ENCODE measurements at regions of chr19 and their contacts with region 1.

Region 1: DNA sequence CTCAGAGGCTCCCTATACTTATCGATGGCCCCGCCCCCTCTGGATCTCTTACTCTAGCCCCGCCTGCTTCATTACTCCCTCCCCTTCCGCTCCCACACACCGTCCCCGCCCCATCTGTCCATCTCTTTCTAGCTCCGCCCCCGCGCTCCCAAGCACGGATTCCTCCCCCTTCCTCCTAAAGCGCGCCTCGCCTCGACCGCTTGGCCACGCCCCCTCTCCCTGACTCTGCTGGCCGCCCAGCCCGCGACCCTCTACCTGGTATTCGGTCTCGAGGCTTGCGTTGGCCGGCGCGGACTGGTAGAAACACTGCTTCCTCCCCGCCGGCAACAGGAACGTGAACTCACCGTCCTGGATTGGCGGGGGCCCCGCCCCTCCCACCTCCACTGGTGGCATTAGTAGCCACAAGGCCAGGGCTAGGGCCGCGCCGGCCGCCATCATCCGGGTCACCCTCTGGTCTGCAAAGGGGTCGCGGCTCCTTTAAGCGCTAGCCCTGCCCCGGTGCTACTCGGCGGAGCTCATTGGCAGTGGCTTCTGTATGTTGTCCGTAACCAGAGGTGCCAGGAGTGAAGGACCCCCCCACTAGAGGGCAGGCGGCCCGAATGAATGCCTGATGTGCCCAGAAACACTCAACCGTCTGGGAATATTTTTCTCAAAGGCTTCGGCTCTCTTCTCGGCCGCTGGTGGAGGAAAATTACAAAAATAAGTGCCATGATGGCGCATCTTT is at the start of gene TMED1:
- DNase-seq: peak; percentile 99

Region 2: DNA sequence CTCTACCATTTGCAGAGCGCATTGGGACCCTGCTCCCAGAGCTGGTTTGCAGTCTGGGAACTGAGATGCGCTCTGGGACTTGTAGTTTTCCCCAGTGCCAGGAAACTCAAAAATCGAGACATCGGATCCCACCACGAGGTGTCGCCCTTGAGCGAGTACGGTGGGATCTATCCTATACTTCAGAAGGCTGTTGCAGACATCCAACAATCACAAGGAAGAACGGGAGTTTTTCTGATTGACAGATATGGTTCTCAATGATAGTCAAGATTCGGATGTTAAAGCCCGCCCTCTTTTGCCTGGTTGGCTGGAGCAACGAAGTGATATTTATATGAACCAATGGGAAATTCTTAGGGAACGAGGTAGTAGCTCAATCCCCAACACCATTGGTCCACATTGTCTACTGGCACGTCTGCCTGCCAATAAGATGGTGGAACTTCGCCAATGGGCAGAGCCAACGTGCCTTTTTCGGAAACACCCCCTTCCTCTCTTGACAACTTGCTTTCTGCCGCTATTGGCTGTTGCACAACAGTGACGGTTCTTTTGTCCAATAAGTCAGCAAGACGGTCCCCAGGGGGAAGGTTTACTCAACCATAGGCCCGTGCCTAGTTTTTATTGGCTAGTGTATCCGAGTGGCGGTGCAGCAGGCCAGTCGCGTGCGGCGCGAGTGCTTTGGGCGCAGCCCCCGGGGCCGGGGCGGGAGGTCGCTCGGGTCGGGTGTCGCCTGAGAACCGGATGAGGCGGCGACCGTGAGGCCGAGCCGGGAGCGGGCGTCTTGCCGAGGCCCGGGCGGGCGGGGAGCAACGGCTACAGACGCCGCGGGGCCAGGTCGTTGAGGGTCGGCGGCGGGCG is 118.3 kb before region 1 on chr19 and contains the start of gene DNM2:
- CTCF ChIA-PET with region 1: no interaction called
- POLR2A ChIA-PET with region 1: interaction called, 26 read pairs
- DNase-seq: peak; percentile 91

Region 3: GRCh38 chr19:10812196-10812595 is 23.7 kb before region 1 on chr19:
- CTCF ChIA-PET with region 1: no interaction called
- POLR2A ChIA-PET with region 1: no interaction called
- DNase-seq: no peak

Region 4: GRCh38 chr19:10848230-10848856 is 12.4 kb after region 1 on chr19 and contains the start of gene C19orf38:
- CTCF ChIA-PET with region 1: no interaction called
- POLR2A ChIA-PET with region 1: interaction called, 12 read pairs
- DNase-seq: no peak

Region 5: DNA sequence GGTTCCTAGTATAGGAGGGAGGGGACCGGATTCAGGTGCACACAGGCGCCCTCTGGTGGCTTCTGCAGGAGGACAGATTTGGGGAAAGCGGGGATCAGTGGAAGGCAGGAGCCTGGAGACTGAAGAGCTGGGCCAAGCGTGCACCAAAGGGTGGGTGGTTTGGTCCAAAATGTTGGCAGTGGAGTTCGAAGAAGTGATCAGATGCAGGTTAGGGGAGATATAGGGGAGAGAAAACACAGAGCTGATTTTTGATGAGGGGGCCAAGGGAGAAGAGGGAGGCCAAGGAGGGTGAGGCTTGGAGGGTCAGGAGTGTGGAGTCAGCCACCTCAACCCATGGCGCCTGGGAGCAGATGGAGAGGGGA is 28.6 kb after region 1 on chr19:
- CTCF ChIA-PET with region 1: interaction called, 9 read pairs
- POLR2A ChIA-PET with region 1: interaction called, 72 read pairs
- DNase-seq: peak; percentile 81

Region 6: GRCh38 chr19:10876459-10877240 is 40.7 kb after region 1 on chr19:
- CTCF ChIA-PET with region 1: no interaction called
- POLR2A ChIA-PET with region 1: interaction called, 20 read pairs
- DNase-seq: no peak

Region 7: GRCh38 chr19:10963865-10964264 is 127.9 kb after region 1 on chr19:
- CTCF ChIA-PET with region 1: no interaction called
- POLR2A ChIA-PET with region 1: no interaction called
- DNase-seq: no peak